ENCODE measurements at regions of chr5 and their contacts with region 1.

Region 1: DNA sequence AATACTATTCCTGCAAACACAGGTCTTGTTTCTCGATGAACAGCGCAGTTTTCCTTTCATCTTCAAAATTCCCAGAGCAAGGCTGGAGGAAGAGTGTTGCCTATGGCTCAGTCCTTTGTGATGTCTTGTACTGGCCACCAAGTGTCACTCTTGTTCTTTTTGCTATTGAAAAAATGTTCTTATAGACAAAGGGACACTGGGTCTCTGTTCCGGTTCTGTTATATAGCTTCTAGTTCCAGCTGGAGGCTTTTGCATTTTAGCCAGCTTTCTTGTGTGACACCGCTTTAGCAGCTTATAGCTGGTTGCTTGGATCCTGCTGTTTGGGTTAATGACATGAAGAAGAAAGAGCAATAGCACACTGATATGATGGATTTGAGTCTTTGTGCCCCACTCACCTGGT is 343.7 kb upstream of the KCNN2 start:
- DNase-seq: no peak
- ATAC-seq: peak in 4 of 8 donors; percentile 33 to 60 (median 54)
- H3K4me3 ChIP-seq: no peak overlapping the region
- H3K27ac ChIP-seq: no peak overlapping the region
- H3K4me1 ChIP-seq: no peaks in the 10 kb centered on the region
- H3K27me3 ChIP-seq: peaks cover 0 to 16% (median 0%) of the 10 kb centered on the region in 7 donors
- CTCF ChIP-seq: peak; percentile 15 to 70 (median 50)

Region 2: GRCh38 chr5:113950186-113950585 is 68.0 kb before region 1 on chr5:
- intact Hi-C with region 1: no loop called
- DNase-seq: no peak
- ATAC-seq: peak in 3 of 8 donors; percentile 48 to 53 (median 50)
- H3K4me3 ChIP-seq: no peak overlapping the region
- H3K27ac ChIP-seq: no peak overlapping the region
- H3K4me1 ChIP-seq: peaks cover 0 to 4% (median 0%) of the 10 kb centered on the region in 9 donors
- H3K27me3 ChIP-seq: no peaks in the 10 kb centered on the region
- CTCF ChIP-seq: no peak

Region 3: GRCh38 chr5:114050087-114050486 is 31.9 kb after region 1 on chr5:
- intact Hi-C with region 1: no loop called
- DNase-seq: no peak
- ATAC-seq: no peak
- H3K4me3 ChIP-seq: no peak overlapping the region
- H3K27ac ChIP-seq: no peak overlapping the region
- H3K4me1 ChIP-seq: peaks cover 1 to 9% (median 8%) of the 10 kb centered on the region in 9 donors
- H3K27me3 ChIP-seq: peaks cover 0 to 12% (median 0%) of the 10 kb centered on the region in 7 donors
- CTCF ChIP-seq: no peak

Region 4: DNA sequence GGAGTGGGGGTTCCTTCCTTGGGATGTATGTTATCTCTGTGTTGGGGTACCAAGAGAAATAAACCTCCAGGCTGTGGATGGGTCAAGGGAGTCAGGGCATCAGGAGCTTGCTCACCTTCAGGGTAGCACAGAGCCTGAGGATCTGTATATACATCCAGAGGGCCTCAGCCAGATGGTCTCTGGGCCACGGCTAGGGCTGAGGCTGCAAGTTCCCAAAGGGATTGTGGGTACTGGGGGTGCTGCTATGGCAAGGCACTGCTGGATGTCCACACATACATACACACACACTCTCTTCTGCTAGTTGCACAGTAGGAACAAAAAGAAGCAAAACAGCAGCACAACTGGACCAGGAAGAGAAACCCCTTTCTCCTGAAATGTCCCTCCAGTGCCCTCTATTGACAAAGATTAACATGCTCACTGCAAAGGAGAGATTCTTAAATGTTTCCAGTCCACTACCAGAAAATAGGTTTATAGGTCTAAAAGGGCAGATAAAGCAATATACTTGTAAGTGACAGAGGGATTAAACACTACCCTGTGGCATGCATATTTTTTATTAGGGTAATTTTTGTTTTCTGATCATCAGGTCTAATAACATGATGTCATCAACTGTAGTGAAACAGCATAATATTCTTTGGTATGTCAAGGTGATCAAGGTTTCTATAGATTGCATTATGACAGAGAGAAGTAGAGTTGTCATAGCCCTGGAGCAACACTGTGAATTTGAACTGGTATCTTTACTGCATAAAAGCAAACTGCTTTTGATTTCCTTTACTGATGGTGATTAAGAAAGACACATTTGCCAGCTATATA is 287.4 kb after region 1 on chr5:
- intact Hi-C with region 1: loop called in 2 of 10 experiments (anchors 5 kb)
- DNase-seq: no peak
- ATAC-seq: peak in 2 of 8 donors; percentile 24 to 31
- H3K4me3 ChIP-seq: no peak overlapping the region
- H3K27ac ChIP-seq: no peak overlapping the region
- H3K4me1 ChIP-seq: no peaks in the 10 kb centered on the region
- H3K27me3 ChIP-seq: no peaks in the 10 kb centered on the region
- CTCF ChIP-seq: peak in 7 of 9 donors; percentile 47 to 69 (median 50)

Region 5: GRCh38 chr5:114789773-114790402 is 771.7 kb after region 1 on chr5:
- intact Hi-C with region 1: loop called in 1 of 10 experiments (anchors 10 kb)
- DNase-seq: no peak
- ATAC-seq: no peak
- H3K4me3 ChIP-seq: no peak overlapping the region
- H3K27ac ChIP-seq: no peak overlapping the region
- H3K4me1 ChIP-seq: no peaks in the 10 kb centered on the region
- H3K27me3 ChIP-seq: peaks cover 0 to 19% (median 5%) of the 10 kb centered on the region in 7 donors
- CTCF ChIP-seq: peak in 7 of 9 donors; percentile 27 to 58 (median 47)

Measured in heart right ventricle (tissue), 16 donors.